ENCODE measurements at regions of chr10 and their contacts with region 1.

Region 1: DNA sequence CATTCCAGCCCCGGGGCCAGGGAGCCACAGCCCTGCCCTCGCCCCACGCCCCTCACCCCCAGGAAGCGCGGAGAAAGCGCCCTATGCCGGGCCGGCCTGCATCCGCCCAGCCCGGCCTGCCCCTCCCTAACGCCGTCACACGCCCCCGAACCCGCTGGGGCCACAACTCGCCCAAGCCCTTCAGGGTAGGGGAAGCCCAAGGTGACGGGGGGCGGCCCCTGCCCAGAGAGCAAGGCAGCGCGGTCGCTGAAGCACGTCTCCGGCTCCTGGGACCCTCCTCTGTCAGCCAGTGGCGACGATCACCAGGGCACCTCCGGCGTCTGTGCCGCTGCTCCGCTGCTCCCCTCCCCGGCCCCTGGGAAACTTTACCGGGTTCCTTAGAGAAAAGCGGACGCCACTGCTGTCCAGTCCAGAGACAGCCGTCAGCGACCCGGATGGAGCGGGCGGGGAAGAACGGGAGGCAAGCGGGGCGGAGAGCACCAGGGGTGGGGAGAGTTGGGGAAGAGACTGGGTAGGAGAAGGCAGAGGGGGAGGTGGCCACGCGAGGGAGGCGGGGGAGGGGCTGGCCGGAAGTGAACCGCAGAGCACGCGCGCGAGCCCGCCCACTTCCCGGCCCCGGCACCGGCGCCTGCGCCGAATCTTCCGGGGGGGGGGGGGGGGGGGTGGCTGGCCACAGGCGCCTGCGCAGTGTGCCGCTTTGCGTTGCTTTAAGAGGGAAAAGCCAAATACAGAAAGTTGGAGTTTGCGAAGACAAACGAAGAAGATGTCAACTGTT is at the start of gene HERC4:
- DNase-seq: peak; percentile 98
- H3K4me3 ChIP-seq: peak within 1 kb of the TSS; percentile 74 to 100 (median 81)
- H3K27ac ChIP-seq: peak within 1 kb of the TSS; percentile 94 to 100 (median 98)
- H3K4me1 ChIP-seq: peaks cover 0 to 41% (median 32%) of the 10 kb centered on the region in 4 donors
- H3K27me3 ChIP-seq: no peaks in the 10 kb centered on the region
- CTCF ChIP-seq: no peak
- EP300 ChIP-seq: no peak
- POLR2A ChIP-seq: peak; percentile 70 to 77
- total RNA-seq, gene HERC4: 49.2 to 54.3 (median 52.0) TPM

Region 2: DNA sequence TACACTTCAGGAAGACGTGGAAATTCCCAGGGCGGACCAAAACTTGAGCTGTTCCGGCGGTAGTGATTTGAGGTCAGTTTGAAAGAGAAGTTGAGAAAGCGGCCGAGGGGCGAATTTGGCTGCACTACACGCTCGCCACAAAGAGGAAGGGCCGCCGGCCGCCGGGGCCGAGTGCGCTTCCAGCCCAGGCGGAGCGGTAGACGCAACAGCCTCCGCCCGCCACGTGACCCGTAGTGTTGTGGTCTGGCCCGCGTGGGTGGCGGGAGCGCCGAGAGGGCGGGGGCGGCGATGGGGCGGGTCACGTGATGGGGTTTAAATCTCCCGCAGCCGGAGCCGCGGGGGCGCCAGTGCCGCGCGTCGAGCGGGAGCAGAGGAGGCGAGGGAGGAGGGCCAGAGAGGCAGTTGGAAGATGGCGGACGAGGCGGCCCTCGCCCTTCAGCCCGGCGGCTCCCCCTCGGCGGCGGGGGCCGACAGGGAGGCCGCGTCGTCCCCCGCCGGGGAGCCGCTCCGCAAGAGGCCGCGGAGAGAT is 190.6 kb before region 1 on chr10 and contains the start of gene SIRT1:
- intact Hi-C with region 1: loop called (anchors 2 kb)
- DNase-seq: peak; percentile 99
- H3K4me3 ChIP-seq: peak within 1 kb of the TSS; percentile 61 to 86 (median 66)
- H3K27ac ChIP-seq: peak within 1 kb of the TSS; percentile 85 to 98 (median 94)
- H3K4me1 ChIP-seq: peaks cover 0 to 38% (median 10%) of the 10 kb centered on the region in 4 donors
- H3K27me3 ChIP-seq: no peaks in the 10 kb centered on the region
- CTCF ChIP-seq: no peak
- EP300 ChIP-seq: peak in 1 of 4 donors; percentile 40
- POLR2A ChIP-seq: peak; percentile 69 to 88
- total RNA-seq, gene SIRT1: 22.4 to 38.2 (median 33.9) TPM

Measured in sigmoid colon (tissue), 7 donors.